K562 (cell line): ENCODE measurements at regions of chr2 and their contacts with region 1.

Region 1: GRCh38 chr2:138059487-138060300 is 95.4 kb downstream of the HNMT start:
- DNase-seq: peak in 2 of 4 experiments; percentile 31 to 71
- ATAC-seq: peak; percentile 74
- H3K4me3 ChIP-seq: no peak overlapping the region
- H3K27ac ChIP-seq: peak overlapping the region; percentile 26; the same call in 1 of the 3 replicates
- H3K4me1 ChIP-seq: peaks cover 6 to 30% of the 10 kb centered on the region in 2 experiments; a peak in 4 of 5 replicates
- H3K27me3 ChIP-seq: no peaks in the 10 kb centered on the region
- CTCF ChIP-seq: no peak
- EP300 ChIP-seq: no peak
- POLR2A ChIP-seq: no peak
- RAD21 ChIP-seq: no peak

Region 2: DNA sequence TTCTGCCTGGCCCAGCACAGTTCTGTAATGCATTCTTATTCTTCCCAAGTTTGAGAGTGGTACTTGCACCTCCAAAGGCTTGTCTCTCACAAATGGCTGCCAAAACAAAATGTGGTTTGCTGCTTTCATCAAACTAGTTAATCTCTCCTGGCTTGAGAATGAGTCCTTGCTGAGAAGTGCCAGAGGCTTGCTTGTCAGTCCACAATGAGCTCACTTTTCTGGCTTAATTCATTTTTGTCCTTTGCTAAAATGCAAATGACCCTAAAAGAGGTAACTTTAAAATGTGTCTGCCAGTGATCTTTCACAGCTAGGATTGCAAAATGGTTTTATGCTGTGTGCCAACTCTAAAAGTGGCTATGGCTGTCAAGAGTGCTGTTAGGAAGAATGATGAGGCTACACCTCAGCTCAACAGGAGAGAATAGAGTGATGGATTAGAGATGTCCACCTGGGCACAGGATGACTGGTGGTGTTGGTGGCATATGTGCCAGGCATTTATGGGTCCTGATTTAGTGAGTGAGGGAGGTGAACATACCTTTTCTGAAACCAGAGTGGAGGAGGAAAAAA is 386.6 kb before region 1 on chr2:
- CTCF ChIA-PET with region 1: no interaction called
- POLR2A ChIA-PET with region 1: no interaction called
- in situ Hi-C with region 1: no loop called
- intact Hi-C with region 1: no loop called
- DNase-seq: no peak
- ATAC-seq: no peak
- H3K4me3 ChIP-seq: no peak overlapping the region
- H3K27ac ChIP-seq: no peak overlapping the region
- H3K4me1 ChIP-seq: no peaks in the 10 kb centered on the region
- H3K27me3 ChIP-seq: no peaks in the 10 kb centered on the region
- CTCF ChIP-seq: no peak
- EP300 ChIP-seq: no peak
- POLR2A ChIP-seq: no peak
- RAD21 ChIP-seq: no peak

Region 3: DNA sequence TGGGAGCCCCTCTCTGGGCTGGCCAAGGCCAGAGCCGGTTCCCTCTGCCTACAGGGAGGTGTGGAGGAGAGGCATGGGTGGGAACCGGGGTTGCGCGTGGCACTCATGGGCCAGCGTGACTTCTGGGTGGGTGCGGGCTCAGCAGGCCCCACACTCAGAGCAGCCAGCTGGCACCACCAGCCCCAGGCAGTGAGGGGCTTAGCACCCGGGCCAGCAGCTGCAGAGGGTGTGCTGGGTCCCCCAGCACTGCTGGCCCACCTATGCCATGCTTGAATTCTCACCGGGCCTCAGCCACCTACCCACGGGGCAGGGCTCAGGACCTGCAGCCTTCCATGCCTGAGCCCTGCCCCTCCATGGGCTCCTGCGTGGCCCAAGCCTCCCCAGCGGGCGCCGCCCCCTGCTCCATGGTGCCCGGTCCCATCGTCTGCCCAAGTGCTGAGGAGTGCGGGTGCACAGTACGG is 343.9 kb before region 1 on chr2:
- CTCF ChIA-PET with region 1: no interaction called
- POLR2A ChIA-PET with region 1: no interaction called
- in situ Hi-C with region 1: no loop called
- intact Hi-C with region 1: no loop called
- DNase-seq: no peak
- ATAC-seq: no peak
- H3K4me3 ChIP-seq: no peak overlapping the region
- H3K27ac ChIP-seq: no peak overlapping the region
- H3K4me1 ChIP-seq: no peaks in the 10 kb centered on the region
- H3K27me3 ChIP-seq: no peaks in the 10 kb centered on the region
- CTCF ChIP-seq: no peak
- EP300 ChIP-seq: no peak
- POLR2A ChIP-seq: no peak
- RAD21 ChIP-seq: no peak

Region 4: DNA sequence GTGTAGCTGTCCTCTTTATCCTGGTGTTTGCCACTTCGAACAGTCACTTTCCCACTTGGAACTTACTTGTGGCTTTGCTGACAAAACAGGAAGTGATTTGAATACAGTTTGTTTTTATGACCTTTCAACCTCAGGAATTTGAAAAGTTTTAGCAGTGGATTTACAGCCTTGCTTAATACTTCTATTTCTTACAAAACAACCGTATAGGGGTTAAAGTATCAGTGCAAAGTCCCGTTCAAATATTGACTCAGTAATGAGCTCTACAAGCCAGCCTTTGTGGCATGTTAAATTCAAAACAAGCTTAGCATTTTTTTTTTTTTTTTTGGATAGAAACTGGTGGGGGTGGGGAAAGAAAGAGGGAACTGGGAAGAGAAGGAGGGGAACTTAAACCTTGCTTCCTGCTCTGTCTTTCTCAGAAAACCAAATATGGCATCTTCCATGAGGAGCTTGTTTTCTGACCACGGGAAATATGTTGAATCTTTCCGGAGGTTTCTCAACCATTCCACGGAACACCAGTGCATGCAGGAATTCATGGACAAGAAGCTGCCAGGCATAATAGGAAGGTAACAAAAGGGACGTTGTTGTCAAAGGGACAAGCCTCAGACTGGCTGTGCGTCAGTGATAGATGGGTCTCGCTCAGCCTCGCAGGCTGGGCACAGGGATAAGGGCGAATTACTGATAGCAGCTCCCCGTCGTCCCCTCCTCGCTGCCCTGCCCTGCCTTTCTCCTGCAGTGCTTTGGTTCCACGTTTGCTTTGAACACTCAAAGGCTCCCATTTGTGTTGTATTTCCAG is 95.4 kb before region 1 on chr2 and contains the start of gene HNMT:
- CTCF ChIA-PET with region 1: no interaction called
- POLR2A ChIA-PET with region 1: no interaction called
- in situ Hi-C with region 1: no loop called
- intact Hi-C with region 1: loop called (anchors 2 kb)
- DNase-seq: peak; percentile 54 to 80 (median 64)
- ATAC-seq: peak; percentile 92
- H3K4me3 ChIP-seq: peak within 1 kb of the TSS; percentile 38
- H3K27ac ChIP-seq: peak within 1 kb of the TSS; percentile 80
- H3K4me1 ChIP-seq: peaks cover 3 to 16% of the 10 kb centered on the region in 2 experiments; a peak in 3 of 5 replicates
- H3K27me3 ChIP-seq: no peaks in the 10 kb centered on the region
- CTCF ChIP-seq: no peak
- EP300 ChIP-seq: peak; percentile 51; the same call in 1 of the 2 replicates
- POLR2A ChIP-seq: no peak
- RAD21 ChIP-seq: no peak
- polyA plus RNA-seq, gene HNMT: 5.3 TPM

Region 5: DNA sequence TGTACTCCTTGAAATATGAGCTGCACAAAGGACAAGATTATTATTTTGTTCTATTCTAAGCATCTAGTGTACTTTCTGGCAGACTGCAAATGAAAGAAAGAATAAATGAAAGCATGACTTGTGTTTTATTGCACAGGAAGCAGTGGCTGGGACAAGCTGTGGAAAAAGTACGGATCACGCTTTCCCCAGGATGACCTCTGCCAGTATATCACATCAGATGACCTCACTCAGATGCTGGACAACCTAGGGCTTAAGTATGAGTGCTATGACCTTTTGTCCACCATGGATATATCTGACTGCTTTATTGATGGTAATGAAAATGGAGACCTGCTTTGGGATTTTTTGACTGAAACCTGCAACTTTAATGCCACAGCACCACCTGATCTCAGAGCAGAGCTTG is 46.1 kb before region 1 on chr2:
- CTCF ChIA-PET with region 1: no interaction called
- POLR2A ChIA-PET with region 1: no interaction called
- in situ Hi-C with region 1: no loop called
- intact Hi-C with region 1: loop called (anchors 2 kb)
- DNase-seq: no peak
- ATAC-seq: peak; percentile 24; the same call in 2 of the 3 replicates
- H3K4me3 ChIP-seq: no peak overlapping the region
- H3K27ac ChIP-seq: no peak overlapping the region
- H3K4me1 ChIP-seq: peaks cover 9 to 24% of the 10 kb centered on the region in 2 experiments; a peak in 3 of 5 replicates
- H3K27me3 ChIP-seq: no peaks in the 10 kb centered on the region
- CTCF ChIP-seq: no peak
- EP300 ChIP-seq: no peak
- POLR2A ChIP-seq: no peak
- RAD21 ChIP-seq: no peak

Region 6: DNA sequence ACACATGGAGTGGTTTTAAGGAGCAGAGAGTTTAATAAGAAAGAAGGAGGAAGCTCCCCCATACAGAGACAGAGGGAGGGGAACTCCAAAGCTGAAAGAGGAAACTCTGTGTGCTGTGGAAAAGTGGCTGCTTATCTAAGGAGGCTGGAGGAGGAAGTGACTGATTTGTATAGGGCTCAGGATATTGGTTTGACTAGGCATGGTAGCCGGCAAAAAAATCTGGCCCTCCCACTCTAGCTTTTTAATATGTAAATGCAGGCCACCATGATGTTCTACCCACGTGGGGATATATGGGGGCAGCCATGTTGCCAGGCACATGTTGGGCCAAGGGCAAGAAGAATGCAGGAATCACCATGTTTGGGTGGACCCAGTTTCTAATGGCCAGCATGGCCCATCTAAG is 31.2 kb before region 1 on chr2:
- CTCF ChIA-PET with region 1: no interaction called
- POLR2A ChIA-PET with region 1: no interaction called
- in situ Hi-C with region 1: no loop called
- intact Hi-C with region 1: loop called (anchors 2 kb)
- DNase-seq: peak in 2 of 4 experiments; percentile 42 to 65
- ATAC-seq: peak; percentile 86
- H3K4me3 ChIP-seq: no peak overlapping the region
- H3K27ac ChIP-seq: no peak overlapping the region
- H3K4me1 ChIP-seq: peaks cover under 1 to 18% of the 10 kb centered on the region in 2 experiments
- H3K27me3 ChIP-seq: no peaks in the 10 kb centered on the region
- CTCF ChIP-seq: no peak
- EP300 ChIP-seq: peak; percentile 47; the same call in 1 of the 2 replicates
- POLR2A ChIP-seq: no peak
- RAD21 ChIP-seq: no peak